ENCODE measurements at regions of chr22 and their contacts with region 1.

Region 1: DNA sequence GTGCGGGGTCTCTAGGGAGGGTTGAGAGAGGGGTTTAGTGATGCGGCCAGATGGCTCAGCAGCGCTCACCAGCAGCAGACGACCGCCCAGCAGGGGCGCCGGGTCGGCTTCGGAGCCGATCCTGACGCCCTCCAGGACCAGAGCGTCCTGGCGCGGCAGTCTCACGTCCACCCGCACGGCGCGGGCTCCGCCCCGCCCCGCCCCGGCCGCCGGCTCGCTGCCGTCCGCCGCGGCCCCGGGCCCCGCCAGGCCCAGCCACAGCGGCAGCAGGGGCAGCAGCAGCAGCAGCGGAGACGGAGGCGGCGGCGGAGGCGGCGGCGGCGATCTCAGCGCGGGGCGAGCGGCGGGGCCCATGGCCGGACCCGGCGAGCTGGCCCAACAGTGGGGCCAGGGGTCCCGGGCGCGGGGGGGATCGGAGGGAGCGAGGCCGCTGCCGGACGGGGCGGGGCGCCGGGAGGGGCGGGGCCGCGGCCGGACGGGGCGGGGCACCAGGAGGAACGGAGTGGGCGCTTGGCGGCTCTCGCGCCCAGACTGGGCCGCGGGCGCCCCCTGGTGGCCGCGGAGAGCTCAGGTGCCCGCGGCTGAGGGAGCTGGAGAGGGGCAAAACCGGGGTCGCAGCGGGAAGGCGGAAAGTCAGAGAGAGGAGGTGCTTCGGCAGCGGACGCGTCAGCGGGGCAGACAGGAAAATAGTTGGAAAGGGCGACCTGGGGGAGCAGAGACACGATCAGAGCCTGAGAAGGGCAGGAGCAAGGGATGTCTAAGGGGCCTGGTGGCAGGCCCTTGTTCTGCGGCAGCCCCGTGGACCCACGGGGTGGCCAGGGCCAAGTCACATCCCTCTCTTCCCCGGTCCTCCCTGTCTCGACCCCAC is at the start of gene RNF215:
- DNase-seq: peak; percentile 60 to 91 (median 75)
- ATAC-seq: peak; percentile 79
- H3K4me3 ChIP-seq: peak within 1 kb of the TSS; percentile 33 to 40
- H3K4me3 Mint-ChIP-seq: peak within 1 kb of the TSS; percentile 85
- H3K27ac ChIP-seq: no peak within 1 kb of the TSS
- H3K27ac Mint-ChIP-seq: peak within 1 kb of the TSS; percentile 82
- H3K4me1 ChIP-seq: peaks cover 16% of the 10 kb centered on the region
- H3K4me1 Mint-ChIP-seq: peaks cover 26% of the 10 kb centered on the region
- H3K27me3 ChIP-seq: peaks cover 0 to 2% of the 10 kb centered on the region in 2 experiments
- H3K27me3 Mint-ChIP-seq: no peaks in the 10 kb centered on the region
- CTCF ChIP-seq: peak; percentile 87
- total RNA-seq, gene RNF215: 7.0 to 7.4 TPM

Region 2: DNA sequence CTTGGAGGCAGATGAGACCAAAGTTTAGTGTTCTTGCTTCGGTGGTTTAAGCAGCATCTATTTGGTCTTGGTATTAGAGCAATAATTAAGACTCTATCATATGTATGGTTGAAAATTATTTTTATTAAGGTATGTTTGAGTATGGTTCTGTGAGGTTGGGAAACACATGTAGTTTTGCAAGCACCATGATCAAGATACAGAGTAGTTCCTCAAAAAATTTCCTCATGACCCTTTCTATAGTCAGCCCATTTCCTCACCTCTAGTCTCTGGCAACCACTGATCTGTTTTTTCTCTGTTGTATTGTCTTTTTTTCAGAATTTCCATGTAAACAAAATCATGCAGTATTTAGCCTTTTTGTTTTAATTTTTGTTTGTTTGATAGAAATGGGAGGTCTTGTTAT is 485.8 kb before region 1 on chr22:
- CTCF ChIA-PET with region 1: no interaction called
- POLR2A ChIA-PET with region 1: no interaction called
- intact Hi-C with region 1: no loop called
- DNase-seq: no peak
- ATAC-seq: no peak
- H3K4me3 ChIP-seq: no peak overlapping the region
- H3K4me3 Mint-ChIP-seq: no peak overlapping the region
- H3K27ac ChIP-seq: no peak overlapping the region
- H3K27ac Mint-ChIP-seq: no peak overlapping the region
- H3K4me1 ChIP-seq: peaks cover 3% of the 10 kb centered on the region
- H3K4me1 Mint-ChIP-seq: peaks cover 61% of the 10 kb centered on the region
- H3K27me3 ChIP-seq: no peaks in the 10 kb centered on the region
- H3K27me3 Mint-ChIP-seq: no peaks in the 10 kb centered on the region
- CTCF ChIP-seq: no peak

Region 3: GRCh38 chr22:30245985-30246901 is 141.0 kb before region 1 on chr22 and contains the start of gene LIF:
- CTCF ChIA-PET with region 1: no interaction called
- POLR2A ChIA-PET with region 1: no interaction called
- intact Hi-C with region 1: no loop called
- DNase-seq: peak in 7 of 9 experiments; percentile 34 to 71 (median 55)
- ATAC-seq: peak; percentile 89
- H3K4me3 ChIP-seq: peak within 1 kb of the TSS; percentile 38 to 59
- H3K4me3 Mint-ChIP-seq: peak within 1 kb of the TSS; percentile 83
- H3K27ac ChIP-seq: no peak within 1 kb of the TSS
- H3K27ac Mint-ChIP-seq: no peak within 1 kb of the TSS
- H3K4me1 ChIP-seq: peaks cover 24% of the 10 kb centered on the region
- H3K4me1 Mint-ChIP-seq: peaks cover 16% of the 10 kb centered on the region
- H3K27me3 ChIP-seq: peaks cover 0 to 15% of the 10 kb centered on the region in 2 experiments
- H3K27me3 Mint-ChIP-seq: peaks cover 16% of the 10 kb centered on the region
- CTCF ChIP-seq: no peak
- total RNA-seq, gene LIF: 0.30 to 0.42 TPM

Region 4: DNA sequence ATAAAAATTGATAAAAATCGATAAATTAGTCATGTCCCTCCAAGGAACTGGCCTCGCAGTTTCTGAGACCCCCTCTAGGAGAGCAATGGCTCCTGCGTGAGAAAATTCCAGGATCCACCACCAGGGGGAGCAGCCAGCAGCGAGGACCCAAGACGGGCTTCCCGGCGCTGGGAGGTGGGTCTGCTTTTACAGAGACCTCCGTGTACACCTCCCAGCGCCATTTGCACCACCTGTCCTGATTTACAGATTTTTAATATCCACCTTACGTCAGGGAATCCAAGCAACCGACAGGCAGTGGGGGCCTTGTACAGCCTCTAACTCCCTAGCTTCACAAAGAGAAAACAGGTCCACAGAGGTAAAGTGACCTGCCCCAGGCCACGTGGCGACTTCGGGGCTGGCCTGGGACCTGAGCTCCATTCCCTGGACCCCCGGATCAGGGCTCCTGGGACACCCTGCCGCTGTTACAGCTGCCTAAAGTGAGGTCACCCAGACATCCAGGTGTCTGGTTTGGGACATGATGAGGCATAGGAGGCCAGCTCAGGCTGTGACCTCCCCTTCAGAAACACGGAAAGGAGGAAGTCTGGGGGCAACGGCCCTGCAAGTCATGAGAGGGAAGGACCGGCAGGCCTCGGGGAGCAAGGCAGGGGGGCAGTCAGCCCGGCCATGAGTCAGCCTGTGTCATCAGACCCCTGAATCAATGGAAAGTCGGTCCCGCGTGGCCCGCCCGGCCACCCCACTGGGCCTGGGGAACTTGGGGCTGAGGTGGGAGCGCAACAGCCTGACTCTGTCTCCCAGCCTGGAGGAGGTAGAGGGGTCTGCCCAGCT is 124.1 kb before region 1 on chr22:
- CTCF ChIA-PET with region 1: interaction called, 27 read pairs
- POLR2A ChIA-PET with region 1: interaction called, 3 read pairs
- intact Hi-C with region 1: loop called (anchors 1 kb)
- DNase-seq: peak; percentile 57 to 88 (median 82)
- ATAC-seq: no peak
- H3K4me3 ChIP-seq: peak overlapping the region; percentile 7 to 13
- H3K4me3 Mint-ChIP-seq: peak overlapping the region; percentile 43
- H3K27ac ChIP-seq: no peak overlapping the region
- H3K27ac Mint-ChIP-seq: no peak overlapping the region
- H3K4me1 ChIP-seq: peaks cover 32% of the 10 kb centered on the region
- H3K4me1 Mint-ChIP-seq: peaks cover 37% of the 10 kb centered on the region
- H3K27me3 ChIP-seq: no peaks in the 10 kb centered on the region
- H3K27me3 Mint-ChIP-seq: no peaks in the 10 kb centered on the region
- CTCF ChIP-seq: peak; percentile 100

Region 5: GRCh38 chr22:30318799-30319419 is 68.3 kb before region 1 on chr22:
- CTCF ChIA-PET with region 1: interaction called, 10 read pairs
- POLR2A ChIA-PET with region 1: interaction called, 5 read pairs
- intact Hi-C with region 1: no loop called
- DNase-seq: peak in 1 of 9 experiments; percentile 31
- ATAC-seq: peak; percentile 30
- H3K4me3 ChIP-seq: no peak overlapping the region
- H3K4me3 Mint-ChIP-seq: peak overlapping the region; percentile 58
- H3K27ac ChIP-seq: peak overlapping the region in 1 of 2 experiments; percentile 21
- H3K27ac Mint-ChIP-seq: peak overlapping the region; percentile 79
- H3K4me1 ChIP-seq: peaks cover 100% of the 10 kb centered on the region
- H3K4me1 Mint-ChIP-seq: peaks cover 94% of the 10 kb centered on the region
- H3K27me3 ChIP-seq: no peaks in the 10 kb centered on the region
- H3K27me3 Mint-ChIP-seq: no peaks in the 10 kb centered on the region
- CTCF ChIP-seq: no peak

Region 6: GRCh38 chr22:30356449-30357235 is 30.6 kb before region 1 on chr22 and contains the starts of genes CCDC157 and SF3A1:
- CTCF ChIA-PET with region 1: interaction called, 4 read pairs
- POLR2A ChIA-PET with region 1: interaction called, 4 read pairs
- intact Hi-C with region 1: loop called (anchors 1 kb)
- DNase-seq: peak; percentile 74 to 96 (median 87)
- ATAC-seq: peak; percentile 83
- H3K4me3 ChIP-seq: peak within 1 kb of the TSS; percentile 73 to 94
- H3K4me3 Mint-ChIP-seq: peak within 1 kb of the TSS; percentile 92
- H3K27ac ChIP-seq: peak within 1 kb of the TSS; percentile 93 to 99
- H3K27ac Mint-ChIP-seq: peak within 1 kb of the TSS; percentile 93
- H3K4me1 ChIP-seq: peaks cover 44% of the 10 kb centered on the region
- H3K4me1 Mint-ChIP-seq: peaks cover 48% of the 10 kb centered on the region
- H3K27me3 ChIP-seq: no peaks in the 10 kb centered on the region
- H3K27me3 Mint-ChIP-seq: no peaks in the 10 kb centered on the region
- CTCF ChIP-seq: no peak
- total RNA-seq, gene CCDC157: 8.7 to 11.7 TPM
- total RNA-seq, gene SF3A1: 406 to 422 TPM

Region 7: GRCh38 chr22:30435674-30436126 is 48.5 kb after region 1 on chr22:
- CTCF ChIA-PET with region 1: interaction called, 210 read pairs
- POLR2A ChIA-PET with region 1: no interaction called
- intact Hi-C with region 1: loop called in 1 of 2 experiments (anchors 2 kb)
- DNase-seq: peak; percentile 68 to 99 (median 89)
- ATAC-seq: peak; percentile 92
- H3K4me3 ChIP-seq: peak overlapping the region; percentile 39 to 51
- H3K4me3 Mint-ChIP-seq: peak overlapping the region; percentile 65
- H3K27ac ChIP-seq: peak overlapping the region; percentile 80 to 100
- H3K27ac Mint-ChIP-seq: peak overlapping the region; percentile 97
- H3K4me1 ChIP-seq: peaks cover 17% of the 10 kb centered on the region
- H3K4me1 Mint-ChIP-seq: peaks cover 26% of the 10 kb centered on the region
- H3K27me3 ChIP-seq: peaks cover 0 to 6% of the 10 kb centered on the region in 2 experiments
- H3K27me3 Mint-ChIP-seq: peaks cover 22% of the 10 kb centered on the region
- CTCF ChIP-seq: peak; percentile 70

Region 8: GRCh38 chr22:30591588-30592359 is 204.6 kb after region 1 on chr22 and contains the start of gene PES1:
- CTCF ChIA-PET with region 1: no interaction called
- POLR2A ChIA-PET with region 1: no interaction called
- intact Hi-C with region 1: loop called in 1 of 2 experiments (anchors 2 kb)
- DNase-seq: peak; percentile 90 to 99 (median 95)
- ATAC-seq: peak; percentile 96
- H3K4me3 ChIP-seq: peak within 1 kb of the TSS; percentile 79 to 80
- H3K4me3 Mint-ChIP-seq: no peak within 1 kb of the TSS
- H3K27ac ChIP-seq: peak within 1 kb of the TSS; percentile 89 to 97
- H3K27ac Mint-ChIP-seq: no peak within 1 kb of the TSS
- H3K4me1 ChIP-seq: peaks cover 15% of the 10 kb centered on the region
- H3K4me1 Mint-ChIP-seq: no peaks in the 10 kb centered on the region
- H3K27me3 ChIP-seq: no peaks in the 10 kb centered on the region
- H3K27me3 Mint-ChIP-seq: peaks cover 13% of the 10 kb centered on the region
- CTCF ChIP-seq: no peak
- total RNA-seq, gene PES1: 39.7 to 47.0 TPM

Measured in CD8-positive, alpha-beta T cell (primary cell).